ENCODE measurements at regions of chr7 and their contacts with region 1.

Region 1: DNA sequence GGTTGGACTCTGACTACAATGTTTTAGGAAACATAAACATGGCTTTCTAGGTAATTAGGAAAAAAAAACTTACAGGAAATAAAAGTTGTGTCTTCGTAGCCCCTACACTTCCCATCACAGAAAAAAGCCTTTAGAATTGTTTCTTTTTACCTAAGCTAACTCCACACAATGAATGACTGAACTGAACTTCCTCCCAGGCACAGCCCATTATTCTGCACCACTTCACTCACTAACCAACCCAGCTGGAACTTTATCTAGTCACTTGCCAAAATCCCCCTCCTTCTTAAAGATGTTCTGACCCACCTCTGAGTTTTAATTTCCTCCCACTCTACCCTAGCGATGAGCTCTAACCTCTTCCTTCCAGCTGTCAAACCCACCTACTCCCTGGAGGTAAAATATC is 91.7 kb upstream of the MEOX2 start:
- DNase-seq: no peak
- ATAC-seq: no peak

Region 2: DNA sequence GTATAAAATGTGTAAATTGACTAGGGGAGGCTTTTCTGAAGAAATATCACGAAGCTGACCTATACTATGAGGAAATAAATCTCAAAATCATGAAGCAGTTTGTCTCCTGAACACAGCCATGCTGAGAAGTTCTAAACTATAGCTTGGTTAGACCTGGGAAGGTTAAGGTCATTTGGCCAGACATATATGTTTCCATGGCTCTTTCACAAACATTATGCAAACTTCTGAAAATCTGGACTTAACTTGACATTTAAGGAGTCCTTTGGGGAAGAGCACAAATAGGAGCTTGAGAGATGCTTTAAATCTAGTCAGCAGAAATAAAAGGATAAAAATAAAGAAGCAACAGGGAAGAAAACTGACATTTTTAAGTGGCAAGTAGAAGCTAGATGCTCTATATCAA is 24.2 kb after region 1 on chr7:
- intact Hi-C with region 1: loop called (anchors 1 kb)
- DNase-seq: no peak
- ATAC-seq: peak; percentile 3

Measured in sciatic nerve (tissue), 2 donors.